CD14-positive monocyte (primary cell): ENCODE measurements at regions of chr20 and their contacts with region 1.

Region 1: DNA sequence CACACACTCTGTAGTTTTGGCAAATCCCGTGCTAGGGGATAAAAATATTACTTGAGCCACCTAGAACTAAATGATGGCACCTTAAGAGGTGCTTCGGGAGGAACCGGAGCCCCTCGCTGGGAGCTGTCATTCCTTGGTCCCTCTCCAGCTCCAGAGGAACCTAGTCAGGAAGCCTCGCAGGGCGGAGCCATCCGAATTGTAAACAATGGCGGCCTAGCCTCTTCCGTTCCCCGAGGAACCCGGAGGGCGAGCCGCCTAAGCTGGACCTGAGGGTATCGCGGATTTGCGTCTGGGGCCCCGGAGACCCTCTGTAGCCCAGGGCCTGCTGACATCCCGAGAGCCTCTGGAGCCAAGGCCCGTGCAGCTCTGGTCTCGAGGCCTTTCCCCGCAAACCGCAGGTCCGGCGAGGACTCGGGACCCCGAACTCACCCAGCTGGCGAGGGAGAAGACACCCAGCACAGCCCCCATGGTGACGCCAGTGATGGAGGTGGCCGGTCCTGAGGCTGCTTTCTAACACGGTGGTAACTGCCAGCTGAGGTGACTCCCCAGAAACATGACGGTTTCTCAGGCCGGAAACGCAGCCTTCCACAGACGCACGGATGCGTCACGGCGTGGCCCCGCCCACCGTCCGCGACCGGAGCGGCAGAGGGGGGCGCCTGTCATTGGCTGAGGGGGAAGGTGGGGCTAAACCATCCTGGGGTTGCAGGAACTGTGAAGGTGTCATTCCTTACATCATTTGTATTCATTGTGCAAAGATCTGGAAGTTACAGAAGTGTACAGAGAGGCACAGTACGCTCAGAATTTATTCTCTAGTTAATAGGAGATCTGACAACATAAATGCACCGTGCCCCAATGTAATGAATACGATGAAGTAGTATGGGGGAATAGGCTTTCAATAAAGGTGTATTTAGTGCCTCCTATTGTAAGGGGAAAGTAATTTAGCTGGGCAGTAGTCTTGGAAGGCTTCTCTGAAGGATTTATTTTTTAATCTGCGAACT is at the start of gene SERINC3:
- DNase-seq: peak; percentile 96 to 98 (median 98)
- H3K4me3 ChIP-seq: peak within 1 kb of the TSS; percentile 88 to 97 (median 95)
- H3K4me3 Mint-ChIP-seq: peak within 1 kb of the TSS; percentile 87 to 88
- H3K27ac ChIP-seq: peak within 1 kb of the TSS; percentile 92 to 97
- H3K27ac Mint-ChIP-seq: peak within 1 kb of the TSS; percentile 95 to 98 (median 96)
- H3K4me1 ChIP-seq: peaks cover 25 to 39% of the 10 kb centered on the region in 2 donors
- H3K4me1 Mint-ChIP-seq: peaks cover 40% of the 10 kb centered on the region
- H3K27me3 ChIP-seq: no peaks in the 10 kb centered on the region
- H3K27me3 Mint-ChIP-seq: no peaks in the 10 kb centered on the region
- CTCF ChIP-seq: no peak
- polyA plus RNA-seq, gene SERINC3: 49.8 to 194 (median 157) TPM

Region 2: GRCh38 chr20:44475694-44476560 is 45.9 kb before region 1 on chr20 and contains the start of gene TTPAL:
- intact Hi-C with region 1: loop called in 1 of 2 experiments (anchors 5 kb)
- DNase-seq: peak; percentile 82 to 87 (median 85)
- H3K4me3 ChIP-seq: peak within 1 kb of the TSS; percentile 59 to 75 (median 74)
- H3K4me3 Mint-ChIP-seq: peak within 1 kb of the TSS; percentile 89 to 94
- H3K27ac ChIP-seq: peak within 1 kb of the TSS; percentile 46 to 88
- H3K27ac Mint-ChIP-seq: peak within 1 kb of the TSS; percentile 91 to 96 (median 94)
- H3K4me1 ChIP-seq: peaks cover 14 to 17% of the 10 kb centered on the region in 2 donors
- H3K4me1 Mint-ChIP-seq: peaks cover 19% of the 10 kb centered on the region
- H3K27me3 ChIP-seq: no peaks in the 10 kb centered on the region
- H3K27me3 Mint-ChIP-seq: peaks cover 0 to 6% (median 4%) of the 10 kb centered on the region in 3 donors
- CTCF ChIP-seq: no peak
- polyA plus RNA-seq, gene TTPAL: 1.5 to 4.9 (median 3.0) TPM

Region 3: GRCh38 chr20:44576297-44576696 is 54.5 kb after region 1 on chr20:
- intact Hi-C with region 1: loop called (anchors 5 to 10 kb)
- DNase-seq: peak; percentile 48 to 65 (median 51)
- H3K4me3 ChIP-seq: peak overlapping the region in 1 of 3 experiments; percentile 5
- H3K4me3 Mint-ChIP-seq: peak overlapping the region in 1 of 2 donors; percentile 77
- H3K27ac ChIP-seq: peak overlapping the region in 1 of 2 donors; percentile 70
- H3K27ac Mint-ChIP-seq: peak overlapping the region; percentile 82 to 92 (median 89)
- H3K4me1 ChIP-seq: peaks cover 21 to 22% of the 10 kb centered on the region in 2 donors
- H3K4me1 Mint-ChIP-seq: peaks cover 39% of the 10 kb centered on the region
- H3K27me3 ChIP-seq: no peaks in the 10 kb centered on the region
- H3K27me3 Mint-ChIP-seq: peaks cover 0 to 3% (median 0%) of the 10 kb centered on the region in 3 donors
- CTCF ChIP-seq: peak; percentile 41

Region 4: DNA sequence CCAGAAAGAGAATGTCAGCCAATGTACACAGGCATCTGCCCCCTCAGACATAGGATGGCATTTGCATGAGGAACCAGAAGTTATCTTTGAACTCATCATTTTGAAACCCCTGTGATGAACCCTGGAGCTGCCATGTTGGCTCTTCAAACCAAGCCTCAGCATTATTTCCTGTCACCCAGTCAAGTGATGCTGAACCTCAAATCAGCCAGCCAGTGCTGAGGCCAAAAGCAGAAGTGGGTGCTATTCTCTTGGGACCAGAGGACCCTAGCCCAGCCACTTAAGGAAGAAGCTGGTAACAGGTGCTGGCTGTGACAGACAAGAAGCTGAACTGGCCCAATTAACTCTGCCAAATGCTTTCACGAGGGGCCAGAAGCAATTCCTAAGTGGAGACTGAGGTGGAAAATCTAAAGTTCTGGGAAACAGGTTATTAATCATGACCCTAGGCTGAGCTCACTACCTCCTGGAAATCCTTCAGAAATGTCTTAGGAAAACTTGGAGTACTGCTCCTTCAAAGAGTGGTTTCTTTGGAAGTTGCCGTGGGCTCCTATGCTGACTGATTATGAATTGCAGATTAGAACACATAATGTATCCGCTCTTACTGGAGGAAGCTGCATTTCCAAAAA is 64.6 kb after region 1 on chr20:
- intact Hi-C with region 1: no loop called
- DNase-seq: peak; percentile 47 to 75 (median 59)
- H3K4me3 ChIP-seq: no peak overlapping the region
- H3K4me3 Mint-ChIP-seq: no peak overlapping the region
- H3K27ac ChIP-seq: no peak overlapping the region
- H3K27ac Mint-ChIP-seq: peak overlapping the region in 3 of 7 donors; percentile 37 to 46 (median 45)
- H3K4me1 ChIP-seq: peaks cover 32 to 34% of the 10 kb centered on the region in 2 donors
- H3K4me1 Mint-ChIP-seq: peaks cover 45% of the 10 kb centered on the region
- H3K27me3 ChIP-seq: no peaks in the 10 kb centered on the region
- H3K27me3 Mint-ChIP-seq: peaks cover 0 to 2% (median 0%) of the 10 kb centered on the region in 3 donors
- CTCF ChIP-seq: no peak